ENCODE measurements at regions of chr12 and their contacts with region 1.

Region 1: DNA sequence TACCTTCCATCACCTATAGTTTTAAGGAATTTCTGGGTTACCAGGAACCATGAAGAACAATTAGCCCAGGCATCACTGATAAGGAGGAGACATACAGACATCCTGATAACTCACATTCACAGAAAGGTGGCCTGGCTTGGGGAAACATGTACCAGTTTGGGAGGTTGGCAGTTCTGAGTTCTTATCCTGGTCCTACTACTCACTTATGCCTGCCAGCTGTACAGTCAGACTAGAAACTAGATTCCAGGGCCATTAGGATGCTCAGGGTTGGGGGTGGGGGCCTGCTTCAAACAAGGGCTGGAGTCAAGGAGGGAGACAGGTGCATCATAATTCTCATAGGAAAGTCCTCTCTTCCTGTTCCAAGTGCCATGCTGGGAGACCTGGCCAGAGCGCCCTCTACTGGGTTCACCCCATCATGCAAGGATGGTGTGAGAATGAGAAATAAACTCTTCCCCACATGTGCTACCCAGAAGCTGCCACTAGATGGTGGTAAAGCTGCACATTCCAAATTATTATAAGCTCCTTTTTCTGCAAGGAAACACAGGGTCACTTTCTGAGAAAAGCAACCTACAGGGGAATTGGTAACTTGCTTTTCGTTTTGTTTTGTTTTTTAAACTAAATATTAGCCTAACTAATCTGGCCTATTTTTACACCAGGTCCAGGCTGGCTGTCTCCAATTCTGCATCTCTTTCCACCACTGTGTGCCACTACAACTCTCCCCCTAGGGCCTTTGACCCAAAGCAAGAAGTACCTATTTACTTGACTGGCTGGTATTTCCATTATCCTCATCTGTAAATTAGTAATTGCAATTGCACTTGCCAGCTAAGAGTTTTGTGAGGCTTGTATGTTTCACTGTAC is 14.5 kb downstream of the OAS2 start:
- DNase-seq: no peak
- H3K4me3 ChIP-seq: no peak overlapping the region
- CTCF ChIP-seq: peak; percentile 73

Region 2: GRCh38 chr12:112978163-112979040 is 14.4 kb before region 1 on chr12 and contains the start of gene OAS2:
- CTCF ChIA-PET with region 1: interaction called, 16 read pairs
- POLR2A ChIA-PET with region 1: no interaction called
- DNase-seq: peak; percentile 26
- H3K4me3 ChIP-seq: peak within 1 kb of the TSS; percentile 36
- CTCF ChIP-seq: no peak

Region 3: GRCh38 chr12:113007166-113007565 is 14.4 kb after region 1 on chr12:
- CTCF ChIA-PET with region 1: interaction called, 19 read pairs
- POLR2A ChIA-PET with region 1: no interaction called
- DNase-seq: no peak
- H3K4me3 ChIP-seq: no peak overlapping the region
- CTCF ChIP-seq: no peak

Region 4: DNA sequence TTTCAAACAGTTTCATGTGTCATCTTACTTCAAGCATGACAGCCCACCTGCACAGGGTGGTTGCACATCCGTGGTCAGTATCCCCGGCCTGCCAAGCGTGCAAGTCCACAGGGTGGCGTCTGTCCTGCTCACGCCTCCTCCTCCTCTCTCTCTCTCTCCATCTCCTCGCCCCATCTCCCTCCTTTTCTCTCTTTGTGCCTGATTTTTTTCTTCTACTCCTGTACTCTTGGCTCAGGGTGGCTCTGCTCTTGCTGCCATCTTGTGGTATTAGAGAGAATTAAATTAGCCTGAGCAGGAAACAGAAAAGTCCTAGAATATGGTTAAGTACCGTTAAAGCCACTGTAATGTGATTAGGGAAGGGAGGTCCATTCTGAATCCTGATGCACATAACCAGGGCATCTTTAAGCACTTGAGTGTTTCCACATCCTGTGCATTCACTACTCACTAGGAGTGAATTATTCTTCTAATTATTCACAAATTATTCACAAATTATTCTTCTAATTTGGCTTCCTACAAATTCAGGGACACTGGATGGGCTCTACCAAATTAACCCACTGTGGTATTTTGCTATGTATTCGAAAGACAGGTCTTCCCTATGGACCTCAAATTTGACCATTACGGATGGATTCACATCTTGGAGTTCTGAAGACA is 38.2 kb after region 1 on chr12:
- CTCF ChIA-PET with region 1: interaction called, 54 read pairs
- POLR2A ChIA-PET with region 1: no interaction called
- DNase-seq: peak; percentile 9
- H3K4me3 ChIP-seq: no peak overlapping the region
- CTCF ChIP-seq: peak; percentile 61

Region 5: GRCh38 chr12:113152835-113153814 is 160.4 kb after region 1 on chr12:
- CTCF ChIA-PET with region 1: interaction called, 17 read pairs
- POLR2A ChIA-PET with region 1: no interaction called
- DNase-seq: no peak
- H3K4me3 ChIP-seq: peak overlapping the region; percentile 42
- CTCF ChIP-seq: peak; percentile 61

Region 6: GRCh38 chr12:113174461-113175384 is 182.0 kb after region 1 on chr12:
- CTCF ChIA-PET with region 1: interaction called, 19 read pairs
- POLR2A ChIA-PET with region 1: no interaction called
- DNase-seq: no peak
- H3K4me3 ChIP-seq: no peak overlapping the region
- CTCF ChIP-seq: peak; percentile 97

Region 7: DNA sequence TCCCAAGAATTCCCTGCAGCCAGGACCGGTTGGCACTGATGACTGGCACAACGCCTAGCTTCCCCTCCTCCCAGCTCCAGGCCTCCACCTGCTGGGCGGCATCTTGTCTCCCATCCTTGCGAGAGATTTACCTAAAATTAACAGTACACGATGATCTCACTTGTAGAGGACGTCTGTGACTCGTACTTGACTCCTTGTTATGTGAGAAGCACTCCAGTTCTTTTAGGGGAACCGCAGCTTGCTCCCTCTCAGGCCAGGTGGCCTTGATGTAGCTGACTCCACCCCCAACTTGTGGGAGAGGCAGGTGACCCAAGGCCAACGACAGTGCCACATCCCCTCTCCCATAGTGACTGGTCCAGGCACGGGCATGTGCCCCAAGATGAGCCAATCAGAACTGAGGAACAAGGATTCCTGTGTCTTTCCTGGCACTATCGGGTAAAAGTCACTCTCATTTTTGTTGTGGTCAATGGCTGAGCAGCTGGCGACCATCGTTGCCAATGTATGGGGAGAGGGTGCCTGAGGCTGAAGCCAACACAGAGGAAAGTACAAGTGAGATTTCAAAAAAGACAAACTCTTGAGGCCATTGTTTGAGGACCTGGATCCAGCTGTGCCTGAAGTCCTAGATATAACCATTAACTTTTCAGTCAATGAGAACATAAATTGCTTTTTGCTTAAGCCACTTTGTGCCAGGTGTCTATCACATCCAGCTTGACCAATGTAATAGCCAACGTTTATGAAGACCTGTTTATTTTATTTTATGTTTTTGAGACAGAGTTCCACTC is 764.6 kb after region 1 on chr12:
- CTCF ChIA-PET with region 1: no interaction called
- POLR2A ChIA-PET with region 1: no interaction called
- DNase-seq: no peak
- H3K4me3 ChIP-seq: no peak overlapping the region
- CTCF ChIP-seq: no peak

Measured in AG04449 (cell line).